RWPE1 (cell line): ENCODE measurements at regions of chr2 and their contacts with region 1.

Region 1: GRCh38 chr2:11617946-11618707 is 51.9 kb downstream of the NTSR2 start:
- DNase-seq: no peak
- H3K27ac ChIP-seq: no peak overlapping the region
- CTCF ChIP-seq: no peak

Region 2: GRCh38 chr2:10171006-10171800 is 1446.9 kb before region 1 on chr2:
- CTCF ChIA-PET with region 1: no interaction called
- POLR2A ChIA-PET with region 1: interaction called, 10 read pairs
- DNase-seq: no peak
- H3K27ac ChIP-seq: no peak overlapping the region
- CTCF ChIP-seq: no peak

Region 3: GRCh38 chr2:11631462-11631861 is 13.3 kb after region 1 on chr2:
- CTCF ChIA-PET with region 1: no interaction called
- POLR2A ChIA-PET with region 1: no interaction called
- DNase-seq: peak; percentile 30
- H3K27ac ChIP-seq: peak overlapping the region; percentile 38; the same call in 1 of the 2 replicates
- CTCF ChIP-seq: no peak

Region 4: DNA sequence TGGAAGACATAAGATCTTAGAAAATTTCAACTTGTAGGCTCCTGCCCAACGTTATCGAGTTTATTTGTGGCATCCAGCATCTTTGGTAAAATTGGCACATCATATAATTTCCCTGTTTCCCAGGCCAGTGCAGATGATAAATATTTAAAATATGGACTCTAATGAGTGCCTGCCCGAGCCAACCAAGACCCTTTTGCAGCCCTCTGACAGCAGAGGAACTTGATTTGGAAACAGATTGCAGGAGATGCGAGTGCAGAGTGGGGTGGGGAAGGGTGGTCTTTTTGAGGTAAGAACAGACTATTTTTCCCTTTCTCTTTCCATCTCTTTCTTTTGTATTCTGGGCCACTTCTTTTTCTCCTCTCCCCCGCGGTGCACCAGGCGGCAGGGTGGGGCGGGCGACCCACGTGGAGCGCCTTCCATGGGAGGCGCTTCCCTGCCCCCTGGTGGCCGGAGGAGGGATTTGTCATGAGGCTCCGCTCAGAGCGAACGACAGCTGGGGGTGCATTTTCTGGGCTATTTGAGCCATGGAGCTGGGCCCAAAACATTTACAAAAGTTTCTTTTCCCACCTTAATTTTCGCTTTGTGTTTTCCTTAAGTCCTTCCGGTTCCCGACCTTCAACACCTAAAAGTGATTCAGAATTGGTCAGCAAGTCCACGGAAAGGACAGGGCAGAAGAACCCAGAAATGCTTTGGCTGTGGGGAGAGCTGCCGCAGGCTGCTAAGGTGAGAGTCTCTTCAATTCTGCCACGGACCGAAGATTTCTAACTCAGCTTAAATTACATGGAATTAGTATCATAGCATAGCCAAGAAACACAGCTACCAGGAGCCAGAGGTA is 161.0 kb after region 1 on chr2:
- CTCF ChIA-PET with region 1: no interaction called
- POLR2A ChIA-PET with region 1: no interaction called
- DNase-seq: peak; percentile 82
- H3K27ac ChIP-seq: no peak overlapping the region
- CTCF ChIP-seq: peak; percentile 93